Right ventricle myocardium superior (tissue), 1 donor: ENCODE measurements at regions of chr4 and their contacts with region 1.

Region 1: DNA sequence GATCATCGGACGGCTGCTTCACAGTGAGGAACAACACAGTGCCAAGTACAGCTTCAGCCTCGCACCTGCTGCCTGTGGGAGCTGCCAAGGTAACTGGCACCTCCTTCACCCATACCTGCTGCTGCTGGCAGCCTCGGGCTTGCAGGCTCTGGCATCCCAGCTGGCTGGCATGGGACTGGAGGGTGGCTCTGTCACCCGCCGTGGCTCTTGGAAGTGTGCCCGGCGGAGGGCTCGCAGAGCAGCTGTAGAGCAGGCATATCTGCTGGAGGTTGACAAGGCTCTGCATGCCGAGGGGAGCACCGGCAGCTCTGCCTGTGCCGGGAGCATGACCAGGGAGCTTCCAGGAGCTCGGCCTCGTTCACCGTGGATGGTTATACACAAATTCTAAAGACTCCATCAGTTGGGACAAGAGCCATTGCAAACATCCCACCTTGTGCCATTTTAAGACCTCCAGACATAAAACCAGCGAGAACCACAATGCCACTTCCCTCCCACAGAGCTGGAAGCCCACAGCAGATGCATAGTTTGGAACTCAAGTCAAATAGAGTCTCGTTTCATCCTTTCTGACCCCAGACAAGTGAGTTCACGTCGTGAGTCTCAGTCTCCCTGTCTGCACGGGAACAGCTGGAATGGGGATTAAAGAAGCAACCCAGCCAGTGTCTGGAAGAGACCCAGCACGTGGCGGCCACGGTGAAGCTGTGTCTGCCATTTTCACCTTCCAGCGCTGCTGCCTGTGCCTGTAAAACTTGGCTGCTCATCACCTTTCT is 84.3 kb upstream of the PSAPL1 start:
- DNase-seq: peak; percentile 78
- ATAC-seq: peak; percentile 87

Region 2: DNA sequence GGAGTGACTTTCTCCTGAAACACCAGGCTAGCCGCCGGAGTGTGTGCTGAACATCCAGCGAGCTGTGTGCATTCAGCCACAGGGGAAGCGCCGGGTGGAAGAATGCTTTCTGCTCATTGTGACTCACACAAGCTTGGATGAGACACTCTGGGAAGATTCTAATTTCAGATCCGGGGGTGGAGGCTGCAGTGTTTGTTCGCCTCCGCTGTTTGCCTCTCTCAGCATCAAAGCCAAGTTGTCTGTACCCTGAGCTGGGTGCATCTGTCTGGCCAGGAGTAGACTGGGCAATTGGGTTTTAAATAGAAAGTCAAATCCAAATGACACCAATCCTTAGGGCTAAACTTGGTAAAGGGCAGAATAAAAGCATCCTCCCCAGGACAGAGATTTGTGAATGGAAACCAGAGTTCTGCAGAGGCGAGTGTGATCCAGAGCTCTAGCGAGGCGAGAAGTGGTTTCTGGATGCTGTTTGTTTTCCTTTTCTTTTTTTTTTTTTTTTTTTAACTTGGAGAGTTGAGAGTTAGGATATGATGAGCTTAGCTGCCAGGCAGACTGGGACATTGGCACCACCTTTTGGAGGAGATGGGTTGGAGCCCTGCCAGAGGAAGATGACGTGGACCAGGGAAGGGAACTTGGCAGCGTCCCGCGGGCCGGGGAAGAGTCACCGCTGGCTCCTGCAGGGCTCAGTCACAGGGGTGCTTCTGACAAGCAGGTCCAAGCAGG is 111.7 kb after region 1 on chr4:
- intact Hi-C with region 1: loop called (anchors 5 kb)
- DNase-seq: peak; percentile 86
- ATAC-seq: peak; percentile 86